Lower leg skin (tissue), 4 donors: ENCODE measurements at regions of chr3 and their contacts with region 1.

Region 1: GRCh38 chr3:192444096-192444790 is 283.1 kb downstream of the FGF12 start:
- DNase-seq: peak; percentile 39 to 90
- H3K4me3 ChIP-seq: no peak overlapping the region
- CTCF ChIP-seq: peak in 1 of 3 donors; percentile 32
- POLR2A ChIP-seq: no peak

Region 2: DNA sequence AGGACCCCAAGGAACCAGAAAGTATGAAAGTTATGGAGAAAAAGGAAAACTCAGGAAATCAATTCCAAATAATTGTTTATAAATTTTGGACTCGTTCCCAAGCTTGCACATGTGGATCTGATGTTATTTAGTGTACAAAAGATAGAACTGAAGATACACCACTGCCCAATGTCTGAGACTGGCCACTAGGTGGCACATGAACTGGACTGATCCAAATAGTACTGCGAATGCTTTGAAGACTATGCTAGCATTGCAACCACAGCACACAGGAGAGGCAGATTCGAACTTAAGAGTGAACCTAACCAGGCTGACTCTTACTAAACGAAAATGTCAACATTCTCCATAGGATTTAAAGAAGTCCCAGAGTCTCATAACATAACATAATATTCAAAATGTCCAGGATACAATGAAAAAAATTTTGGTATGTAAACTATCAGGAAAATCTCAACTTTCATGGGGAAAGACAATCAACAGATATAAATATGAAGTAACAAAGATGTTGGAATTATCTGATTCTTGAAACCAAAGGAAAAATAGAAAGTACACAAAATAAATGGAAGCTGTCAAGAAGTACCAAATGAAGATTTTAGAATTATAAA is 313.6 kb before region 1 on chr3:
- intact Hi-C with region 1: loop called (anchors 2 kb)
- DNase-seq: peak in 1 of 2 donors; percentile 22
- H3K4me3 ChIP-seq: no peak overlapping the region
- CTCF ChIP-seq: no peak
- POLR2A ChIP-seq: no peak